ENCODE measurements at regions of chr14 and their contacts with region 1.

Region 1: GRCh38 chr14:20855652-20856291 is 35.4 kb upstream of the RNASE3 start:
- DNase-seq: peak in 1 of 2 donors; percentile 40
- H3K4me3 ChIP-seq: no peak overlapping the region
- H3K27ac ChIP-seq: no peak overlapping the region
- H3K4me1 ChIP-seq: peaks cover 0 to 4% (median 2%) of the 10 kb centered on the region in 4 donors
- H3K27me3 ChIP-seq: peaks cover 0 to 19% of the 10 kb centered on the region in 2 donors
- CTCF ChIP-seq: peak; percentile 42 to 46

Region 2: GRCh38 chr14:20690848-20691523 is 164.8 kb before region 1 on chr14:
- intact Hi-C with region 1: no loop called
- DNase-seq: peak in 1 of 2 donors; percentile 43
- H3K4me3 ChIP-seq: no peak overlapping the region
- H3K27ac ChIP-seq: no peak overlapping the region
- H3K4me1 ChIP-seq: peaks cover 0 to 33% (median 19%) of the 10 kb centered on the region in 4 donors
- H3K27me3 ChIP-seq: no peaks in the 10 kb centered on the region
- CTCF ChIP-seq: peak; percentile 77 to 81

Region 3: DNA sequence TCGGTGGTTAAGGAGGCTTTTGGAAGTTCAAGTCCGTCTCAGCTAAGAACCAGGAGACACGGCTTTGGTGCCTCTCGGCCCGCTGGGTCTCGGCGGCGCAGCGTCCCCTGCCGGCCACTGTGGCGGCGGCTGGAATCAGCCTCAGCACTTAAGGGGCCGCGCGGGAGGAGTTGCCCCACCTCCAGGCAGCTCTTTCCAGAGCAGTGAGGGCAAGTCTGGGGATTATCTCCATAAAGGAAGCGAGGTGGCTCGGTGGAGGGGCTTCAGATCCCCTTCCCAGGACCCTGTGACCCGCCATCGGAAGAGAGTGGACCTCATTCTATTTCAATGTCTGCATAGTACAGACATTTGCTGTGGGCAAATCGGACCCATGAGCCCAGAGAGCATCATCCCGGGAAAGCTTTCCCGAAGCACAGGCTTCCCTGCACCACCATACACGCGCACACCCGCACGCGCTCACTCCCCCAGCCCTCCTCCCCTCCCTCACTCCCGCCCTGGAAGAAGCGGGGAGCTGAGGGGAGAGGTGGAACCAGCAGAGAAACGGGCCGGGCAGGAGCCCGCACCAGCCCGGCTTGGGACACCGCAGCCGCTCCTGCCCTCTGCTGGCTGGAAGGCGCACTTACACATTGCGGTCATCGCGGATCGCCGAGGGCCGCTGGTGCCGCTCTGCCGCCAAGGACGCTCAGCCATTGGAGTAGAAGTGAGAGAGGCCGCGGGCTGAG is 115.4 kb after region 1 on chr14:
- intact Hi-C with region 1: loop called (anchors 5 kb)
- DNase-seq: peak; percentile 75 to 92
- H3K4me3 ChIP-seq: peak overlapping the region; percentile 60 to 63
- H3K27ac ChIP-seq: peak overlapping the region; percentile 63 to 80
- H3K4me1 ChIP-seq: peaks cover 0 to 27% (median 14%) of the 10 kb centered on the region in 4 donors
- H3K27me3 ChIP-seq: no peaks in the 10 kb centered on the region
- CTCF ChIP-seq: peak; percentile 87